Mammary epithelial cell (primary cell): ENCODE measurements at regions of chr9 and their contacts with region 1.

Region 1: GRCh38 chr9:85142968-85143367 is 473.4 kb downstream of the NTRK2 start:
- DNase-seq: peak; percentile 28
- H3K4me3 ChIP-seq: no peak overlapping the region
- H3K27ac ChIP-seq: no peak overlapping the region
- H3K4me1 ChIP-seq: no peaks in the 10 kb centered on the region
- H3K27me3 ChIP-seq: no peaks in the 10 kb centered on the region
- CTCF ChIP-seq: peak; percentile 69 to 70

Region 2: DNA sequence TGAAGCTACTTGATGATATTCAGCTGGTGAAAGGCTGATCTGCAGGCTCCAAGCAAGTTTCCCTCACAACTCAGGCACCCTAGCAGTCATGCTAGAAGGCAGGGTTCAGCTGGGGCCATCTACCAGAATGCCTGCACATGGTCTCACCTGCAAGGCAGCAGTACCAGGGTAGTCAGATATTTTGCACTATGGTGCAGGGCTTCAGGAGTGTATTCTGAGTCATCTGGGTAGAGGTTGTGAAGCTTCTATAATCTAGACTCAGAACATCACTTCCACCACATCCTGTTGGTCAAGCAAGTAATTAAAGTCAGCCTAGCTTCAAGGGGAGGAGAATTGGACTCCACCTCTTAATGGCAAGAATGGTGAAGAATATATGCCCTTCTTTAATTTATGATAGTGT is 642.8 kb before region 1 on chr9:
- CTCF ChIA-PET with region 1: no interaction called
- dilution Hi-C with region 1: no loop called
- in situ Hi-C with region 1: no loop called
- intact Hi-C with region 1: no loop called
- DNase-seq: peak; percentile 24
- H3K4me3 ChIP-seq: no peak overlapping the region
- H3K27ac ChIP-seq: no peak overlapping the region
- H3K4me1 ChIP-seq: no peaks in the 10 kb centered on the region
- H3K27me3 ChIP-seq: no peaks in the 10 kb centered on the region
- CTCF ChIP-seq: no peak

Region 3: DNA sequence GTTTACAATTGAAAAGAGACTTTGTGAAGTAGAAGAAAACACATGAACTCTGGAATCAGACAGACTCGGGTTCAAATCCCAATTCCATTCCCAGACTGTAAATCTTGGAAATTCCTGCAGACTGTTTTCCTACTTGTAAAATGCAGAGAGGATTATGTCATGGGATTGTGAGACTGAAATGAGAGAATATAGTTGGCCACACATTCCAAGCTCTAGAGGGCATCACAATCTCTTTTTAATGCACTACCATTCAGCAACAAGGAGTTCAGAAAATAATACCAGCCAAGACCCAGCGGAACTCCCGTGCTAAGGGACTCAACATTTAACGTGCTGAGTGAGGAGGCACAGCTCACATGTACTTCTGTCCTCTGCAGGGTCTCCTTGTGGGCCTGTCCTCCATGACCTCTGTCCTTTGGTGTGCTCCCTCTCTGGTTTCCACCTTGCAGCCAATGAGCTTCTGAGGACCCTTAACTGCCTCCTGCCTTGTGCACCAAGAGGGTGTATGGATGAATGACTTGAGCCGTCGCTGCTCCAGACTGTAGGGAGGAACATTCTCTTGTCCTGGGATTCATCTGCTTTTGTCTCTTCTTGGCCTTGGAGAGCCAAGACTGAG is 209.9 kb before region 1 on chr9:
- CTCF ChIA-PET with region 1: no interaction called
- dilution Hi-C with region 1: no loop called
- in situ Hi-C with region 1: no loop called
- intact Hi-C with region 1: loop called (anchors 1 kb)
- DNase-seq: peak; percentile 27
- H3K4me3 ChIP-seq: no peak overlapping the region
- H3K27ac ChIP-seq: no peak overlapping the region
- H3K4me1 ChIP-seq: no peaks in the 10 kb centered on the region
- H3K27me3 ChIP-seq: no peaks in the 10 kb centered on the region
- CTCF ChIP-seq: peak; percentile 32 to 59

Region 4: GRCh38 chr9:84953797-84954705 is 188.9 kb before region 1 on chr9:
- CTCF ChIA-PET with region 1: interaction called, 3 read pairs
- dilution Hi-C with region 1: no loop called
- in situ Hi-C with region 1: no loop called
- intact Hi-C with region 1: loop called (anchors 2 kb)
- DNase-seq: peak; percentile 73
- H3K4me3 ChIP-seq: no peak overlapping the region
- H3K27ac ChIP-seq: peak overlapping the region; percentile 67
- H3K4me1 ChIP-seq: peaks cover 14% of the 10 kb centered on the region
- H3K27me3 ChIP-seq: no peaks in the 10 kb centered on the region
- CTCF ChIP-seq: peak; percentile 99

Region 5: DNA sequence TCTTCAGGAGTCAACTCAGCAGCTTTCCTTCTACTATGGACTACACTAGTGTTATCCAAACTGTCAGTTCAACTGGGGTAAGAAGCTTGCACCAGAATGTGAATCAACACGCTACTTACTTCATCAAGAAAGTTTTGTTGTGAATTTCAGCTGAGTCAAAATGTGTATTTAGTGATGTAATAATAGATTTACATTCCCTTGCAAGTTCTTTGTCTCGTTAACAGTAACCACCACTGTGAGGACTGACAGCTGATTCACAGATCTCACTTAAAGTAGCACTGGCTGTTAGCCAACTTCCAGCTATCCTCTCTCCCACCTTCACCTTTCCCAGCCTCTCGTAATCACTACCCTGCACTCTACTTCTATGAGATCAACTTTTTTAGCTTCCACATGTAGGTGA is 28.2 kb before region 1 on chr9:
- CTCF ChIA-PET with region 1: no interaction called
- dilution Hi-C with region 1: loop called (anchors 5 kb)
- in situ Hi-C with region 1: no loop called
- intact Hi-C with region 1: no loop called
- DNase-seq: peak; percentile 80
- H3K4me3 ChIP-seq: no peak overlapping the region
- H3K27ac ChIP-seq: peak overlapping the region; percentile 43
- H3K4me1 ChIP-seq: peaks cover 30% of the 10 kb centered on the region
- H3K27me3 ChIP-seq: no peaks in the 10 kb centered on the region
- CTCF ChIP-seq: no peak